ENCODE measurements at regions of chr5 and their contacts with region 1.

Region 1: DNA sequence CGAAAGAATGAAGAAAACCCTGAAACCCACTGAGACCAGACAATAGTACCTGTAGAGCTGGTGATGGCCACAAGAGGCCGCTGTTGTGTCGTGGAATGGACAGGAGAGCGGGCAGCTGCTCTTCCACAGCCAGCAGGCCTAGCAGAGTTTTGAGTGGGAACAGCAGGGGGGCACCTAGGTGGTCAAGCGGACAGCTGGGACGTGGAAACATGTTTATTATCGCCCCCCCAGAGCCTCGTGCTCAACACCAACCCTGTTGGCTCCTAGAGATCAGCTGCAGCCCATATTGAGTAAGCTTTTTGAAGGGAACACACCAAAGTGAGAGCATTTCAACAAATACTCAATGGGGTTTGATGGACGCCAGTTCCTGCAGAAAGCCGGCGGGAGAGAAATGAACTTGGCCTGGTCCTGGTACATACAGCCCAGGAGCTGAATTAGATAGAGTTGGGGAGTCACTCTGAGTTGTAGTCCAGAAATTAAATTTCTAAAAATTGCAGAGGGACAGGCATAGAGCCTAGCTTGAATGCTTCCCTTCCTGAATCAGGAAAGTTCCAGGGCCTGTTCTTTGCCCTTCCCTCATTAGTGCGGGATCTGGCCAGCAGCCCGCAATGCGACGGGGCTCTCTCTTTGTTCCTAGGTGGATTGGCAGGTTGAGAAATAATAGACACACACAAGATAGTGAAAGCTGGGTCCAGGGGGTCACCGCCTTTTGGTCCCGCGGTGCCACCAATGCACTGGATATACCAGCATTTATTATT is 33.8 kb downstream of the MFAP3 start:
- DNase-seq: peak; percentile 91
- H3K4me3 Mint-ChIP-seq: no peak overlapping the region
- H3K27ac Mint-ChIP-seq: no peak overlapping the region
- H3K4me1 Mint-ChIP-seq: peaks cover 11% of the 10 kb centered on the region
- H3K27me3 Mint-ChIP-seq: no peaks in the 10 kb centered on the region

Region 2: DNA sequence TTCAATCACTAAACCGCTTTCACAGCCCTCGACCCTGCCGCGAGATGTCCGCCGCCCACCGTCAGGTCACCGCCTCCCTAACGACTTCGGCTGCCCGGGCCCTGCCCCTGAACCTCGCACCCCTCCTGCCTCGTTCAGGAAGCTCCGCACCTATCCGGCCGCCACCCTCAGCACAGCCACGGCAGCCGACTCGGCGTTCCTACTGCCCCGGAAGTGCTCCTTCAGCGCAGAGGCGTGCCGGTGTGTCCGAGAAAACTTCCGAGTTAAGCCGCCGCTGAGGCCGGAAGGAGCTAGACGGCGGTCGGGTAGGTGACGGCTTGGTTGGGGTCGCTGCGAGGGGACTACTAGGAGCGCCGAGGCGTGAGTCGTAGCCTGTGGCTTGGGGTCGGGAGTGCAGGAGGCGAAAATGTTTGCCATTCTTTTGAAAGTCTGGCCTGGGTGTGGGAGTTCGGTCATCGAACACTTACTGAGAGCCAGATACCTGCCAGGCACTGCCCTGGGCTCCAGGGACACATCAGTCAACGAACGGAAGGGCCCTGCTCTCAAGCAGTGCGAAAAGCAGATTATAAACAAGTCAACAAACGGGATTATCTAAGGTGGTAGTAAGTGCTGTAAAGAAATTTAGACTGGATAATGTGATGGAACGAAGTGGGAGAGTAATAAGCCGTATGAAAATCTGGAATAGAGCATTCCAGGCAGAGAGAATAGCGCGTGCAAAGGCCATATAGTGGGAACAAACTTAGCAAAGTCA is 33.7 kb before region 1 on chr5 and contains the starts of genes FAM114A2 and MFAP3:
- CTCF ChIA-PET with region 1: interaction called, 7 read pairs
- intact Hi-C with region 1: loop called (anchors 2 kb)
- DNase-seq: peak; percentile 93
- H3K4me3 Mint-ChIP-seq: peak within 1 kb of the TSS; percentile 95
- H3K27ac Mint-ChIP-seq: peak within 1 kb of the TSS; percentile 92
- H3K4me1 Mint-ChIP-seq: peaks cover 44% of the 10 kb centered on the region
- H3K27me3 Mint-ChIP-seq: no peaks in the 10 kb centered on the region
- total RNA-seq, gene FAM114A2: 25.0 to 25.9 TPM
- total RNA-seq, gene MFAP3: 7.9 to 8.4 TPM

Region 3: DNA sequence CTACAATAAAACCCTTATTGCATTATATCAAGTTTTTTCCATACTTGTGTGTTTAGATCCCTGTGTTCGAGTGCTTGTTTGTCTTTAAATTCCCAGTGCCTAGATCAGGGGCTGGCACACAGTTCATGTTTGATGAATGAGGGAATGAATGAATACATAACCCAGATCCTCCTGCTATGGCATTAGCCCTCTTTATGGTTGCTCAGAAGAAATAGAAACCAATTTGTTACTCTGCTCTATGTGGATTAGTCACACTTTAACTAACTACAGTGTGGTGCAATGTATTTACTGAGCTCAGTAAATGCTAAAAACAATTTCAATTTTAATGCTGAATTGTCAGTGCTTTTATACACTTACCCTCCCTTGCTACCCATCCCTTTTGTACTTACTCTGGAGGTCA is 101.5 kb after region 1 on chr5:
- CTCF ChIA-PET with region 1: interaction called, 49 read pairs
- intact Hi-C with region 1: no loop called
- DNase-seq: no peak
- H3K4me3 Mint-ChIP-seq: no peak overlapping the region
- H3K27ac Mint-ChIP-seq: no peak overlapping the region
- H3K4me1 Mint-ChIP-seq: no peaks in the 10 kb centered on the region
- H3K27me3 Mint-ChIP-seq: no peaks in the 10 kb centered on the region

Region 4: GRCh38 chr5:154189819-154190594 is 117.4 kb after region 1 on chr5:
- CTCF ChIA-PET with region 1: interaction called, 20 read pairs
- intact Hi-C with region 1: loop called (anchors 2 kb)
- DNase-seq: peak; percentile 82
- H3K4me3 Mint-ChIP-seq: peak overlapping the region; percentile 81
- H3K27ac Mint-ChIP-seq: no peak overlapping the region
- H3K4me1 Mint-ChIP-seq: peaks cover 32% of the 10 kb centered on the region
- H3K27me3 Mint-ChIP-seq: peaks cover 7% of the 10 kb centered on the region

Region 5: DNA sequence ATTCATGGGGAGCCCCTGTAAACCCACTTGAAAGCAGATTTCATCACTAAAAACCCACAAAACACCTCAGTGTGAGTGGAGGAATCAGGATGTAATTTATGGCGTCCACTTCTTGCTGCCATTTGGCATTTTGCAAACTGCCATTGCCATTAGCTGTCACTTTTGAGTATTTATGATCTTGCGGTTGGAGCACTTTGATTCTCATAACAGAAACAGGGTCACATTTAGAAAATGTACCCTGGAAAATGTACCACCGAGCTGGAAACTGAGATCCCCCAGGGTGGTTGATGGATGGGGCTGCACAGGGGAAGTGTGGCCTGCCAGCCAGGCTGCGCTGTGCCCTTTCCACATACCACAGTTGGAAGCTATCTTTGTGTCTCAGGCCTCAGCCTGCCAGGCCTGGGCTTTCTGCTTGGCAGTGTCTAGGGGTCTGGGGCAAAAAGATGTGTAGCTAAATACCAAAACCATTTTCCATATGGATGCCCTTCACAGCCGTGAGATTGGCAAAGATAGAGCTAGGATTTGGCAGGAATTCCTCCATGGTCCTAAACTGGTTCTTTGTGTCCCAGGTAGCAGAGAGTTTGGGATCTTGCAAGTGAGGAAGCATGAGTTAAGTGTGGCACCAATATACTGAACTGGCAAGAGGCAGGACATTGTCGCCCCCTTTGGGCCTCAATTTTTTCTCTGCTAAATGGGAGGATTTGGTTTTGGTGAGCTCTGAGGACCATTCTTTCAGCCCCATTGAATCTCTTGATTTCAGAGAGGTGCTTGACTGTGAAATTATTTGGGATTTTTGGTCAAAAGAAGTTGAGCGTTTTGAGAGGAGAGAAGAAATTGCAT is 164.2 kb after region 1 on chr5:
- CTCF ChIA-PET with region 1: interaction called, 13 read pairs
- intact Hi-C with region 1: loop called (anchors 1 kb)
- DNase-seq: peak; percentile 60
- H3K4me3 Mint-ChIP-seq: no peak overlapping the region
- H3K27ac Mint-ChIP-seq: no peak overlapping the region
- H3K4me1 Mint-ChIP-seq: peaks cover 38% of the 10 kb centered on the region
- H3K27me3 Mint-ChIP-seq: no peaks in the 10 kb centered on the region

Region 6: DNA sequence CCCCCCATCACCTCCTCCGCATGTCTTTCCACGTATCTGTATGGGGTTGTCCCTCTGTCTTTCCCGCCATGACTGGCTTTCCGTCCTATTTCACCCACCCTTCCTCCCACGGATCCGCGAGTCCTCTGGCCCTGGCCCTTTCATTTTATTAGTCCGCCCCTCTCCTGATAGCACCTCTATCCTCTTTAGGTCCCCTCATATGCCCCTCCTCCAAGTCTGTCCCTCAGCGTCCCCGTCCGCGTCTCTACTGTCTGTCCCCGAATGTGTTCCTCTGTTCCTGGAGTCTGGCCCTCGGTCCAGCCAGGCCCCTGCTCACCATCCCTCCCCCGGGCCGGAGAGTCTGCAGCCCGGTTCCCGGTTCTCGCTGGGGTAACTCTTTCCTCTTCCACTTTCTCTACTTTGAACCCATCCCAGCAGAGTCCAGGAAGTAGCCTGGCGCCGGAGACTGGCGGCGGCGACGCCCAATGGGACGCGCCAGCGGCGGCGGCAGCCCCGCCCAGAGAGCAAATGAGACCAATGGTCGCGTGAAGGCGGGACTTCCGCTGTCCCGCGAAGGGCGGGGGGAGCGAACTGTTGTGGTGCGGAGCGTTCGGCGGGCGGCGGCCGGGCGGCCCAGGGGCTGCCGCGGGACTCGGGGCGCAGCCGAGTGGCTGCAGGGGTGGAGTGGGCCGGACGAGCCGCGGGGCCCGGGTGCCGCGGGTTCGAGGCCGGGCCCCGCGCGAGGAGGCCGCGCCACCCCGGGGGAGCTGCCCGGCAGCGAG is 373.0 kb after region 1 on chr5 and contains the start of gene SAP30L:
- CTCF ChIA-PET with region 1: interaction called, 3 read pairs
- intact Hi-C with region 1: loop called (anchors 1 kb)
- DNase-seq: peak; percentile 94
- H3K4me3 Mint-ChIP-seq: peak within 1 kb of the TSS; percentile 98
- H3K27ac Mint-ChIP-seq: peak within 1 kb of the TSS; percentile 92
- H3K4me1 Mint-ChIP-seq: peaks cover 42% of the 10 kb centered on the region
- H3K27me3 Mint-ChIP-seq: no peaks in the 10 kb centered on the region
- total RNA-seq, gene SAP30L: 29.3 to 30.3 TPM

Region 7: GRCh38 chr5:154610321-154611154 is 537.9 kb after region 1 on chr5:
- CTCF ChIA-PET with region 1: interaction called, 3 read pairs
- intact Hi-C with region 1: loop called (anchors 1 kb)
- DNase-seq: peak; percentile 84
- H3K4me3 Mint-ChIP-seq: no peak overlapping the region
- H3K27ac Mint-ChIP-seq: no peak overlapping the region
- H3K4me1 Mint-ChIP-seq: peaks cover 6% of the 10 kb centered on the region
- H3K27me3 Mint-ChIP-seq: peaks cover 53% of the 10 kb centered on the region